ENCODE measurements at regions of chr1 and their contacts with region 1.

Region 1: DNA sequence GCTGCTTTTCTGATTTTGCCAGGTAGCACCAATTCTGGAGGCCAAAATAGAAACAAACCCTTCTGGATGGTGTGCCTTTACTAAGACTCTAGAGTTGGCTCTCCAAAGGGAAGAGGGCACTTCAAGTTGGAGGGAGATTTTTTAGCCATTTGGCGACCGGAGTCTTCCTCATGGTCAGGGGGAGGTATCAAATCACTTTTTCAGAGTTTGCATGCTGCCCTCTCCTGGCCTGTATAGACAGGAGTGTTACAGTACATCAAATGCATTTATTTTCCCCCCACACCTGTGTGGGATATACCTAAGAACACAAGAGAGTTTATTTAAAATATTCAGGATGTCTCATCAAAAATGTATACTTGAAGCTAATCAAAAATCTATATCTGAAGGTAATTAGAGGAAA is 3.2 kb downstream of the GREM2 start:
- DNase-seq: peak; percentile 56
- H3K4me3 ChIP-seq: no peak overlapping the region
- H3K27ac ChIP-seq: no peak overlapping the region
- H3K4me1 ChIP-seq: no peaks in the 10 kb centered on the region
- H3K27me3 ChIP-seq: no peaks in the 10 kb centered on the region
- CTCF ChIP-seq: no peak

Region 2: DNA sequence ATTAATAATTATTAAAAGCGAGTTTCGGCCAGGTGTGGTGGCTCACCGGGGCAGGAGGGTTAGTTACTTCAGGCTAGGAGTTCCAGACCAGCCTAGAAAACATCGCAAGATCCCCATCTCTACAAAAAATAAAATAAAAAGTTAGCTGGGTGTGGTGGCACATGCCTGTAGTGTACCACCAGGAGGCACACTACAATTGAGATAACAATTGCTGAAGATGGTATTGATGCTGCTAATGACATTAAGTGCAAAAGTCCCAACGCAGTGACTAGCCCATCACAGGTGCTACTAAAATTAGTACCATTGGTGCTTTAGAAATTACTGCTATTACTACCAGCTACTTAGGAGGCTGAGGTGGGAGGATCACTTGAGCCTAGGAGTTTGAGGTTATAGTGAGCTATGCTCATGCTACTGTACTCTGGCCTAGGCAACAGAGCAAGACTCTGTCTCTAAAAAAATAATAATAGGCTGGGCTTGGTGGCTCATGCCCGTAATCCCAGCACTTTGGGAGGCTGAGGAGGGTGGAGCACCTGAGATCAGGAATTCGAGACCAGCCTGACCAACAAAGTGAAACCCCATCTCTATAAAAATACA is 153.4 kb before region 1 on chr1:
- intact Hi-C with region 1: loop called (anchors 10 kb)
- DNase-seq: no peak
- H3K4me3 ChIP-seq: no peak overlapping the region
- H3K27ac ChIP-seq: no peak overlapping the region
- H3K4me1 ChIP-seq: no peaks in the 10 kb centered on the region
- H3K27me3 ChIP-seq: no peaks in the 10 kb centered on the region
- CTCF ChIP-seq: peak; percentile 39

Region 3: DNA sequence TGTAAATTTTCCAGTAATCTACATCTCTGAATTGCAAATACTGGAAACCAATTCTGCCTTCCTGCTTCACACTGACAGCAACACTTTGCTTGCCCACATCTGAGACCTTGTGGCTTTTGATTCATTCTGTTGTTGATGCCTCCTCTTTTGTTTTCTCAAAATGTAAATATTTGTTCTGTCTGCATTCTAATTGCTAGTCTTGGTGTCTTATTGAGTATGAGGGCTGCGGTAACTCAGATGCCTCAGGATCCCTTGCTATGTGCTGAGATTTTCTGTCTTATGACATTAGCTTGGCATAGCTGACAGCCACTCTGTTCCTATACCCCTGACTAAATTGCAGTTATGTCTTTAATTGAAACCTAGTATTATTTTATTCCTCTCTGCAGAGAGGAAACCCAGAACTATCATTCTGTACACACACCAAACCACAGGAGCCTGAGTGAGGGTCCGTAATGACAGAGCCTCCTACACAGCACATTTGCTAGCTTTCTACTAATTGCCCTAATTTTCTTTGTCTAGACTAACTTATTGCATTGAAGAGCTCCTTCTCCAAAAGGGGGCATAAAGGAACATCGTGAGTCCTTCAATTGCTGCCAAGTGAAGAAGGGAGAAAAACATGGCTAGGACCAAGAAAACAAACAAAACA is 68.8 kb before region 1 on chr1:
- intact Hi-C with region 1: no loop called
- DNase-seq: no peak
- H3K4me3 ChIP-seq: no peak overlapping the region
- H3K27ac ChIP-seq: no peak overlapping the region
- H3K4me1 ChIP-seq: no peaks in the 10 kb centered on the region
- H3K27me3 ChIP-seq: no peaks in the 10 kb centered on the region
- CTCF ChIP-seq: no peak

Measured in colonic mucosa (tissue), 4 donors.